Left cardiac atrium (tissue), 4 donors: ENCODE measurements at regions of chr10 and their contacts with region 1.

Region 1: DNA sequence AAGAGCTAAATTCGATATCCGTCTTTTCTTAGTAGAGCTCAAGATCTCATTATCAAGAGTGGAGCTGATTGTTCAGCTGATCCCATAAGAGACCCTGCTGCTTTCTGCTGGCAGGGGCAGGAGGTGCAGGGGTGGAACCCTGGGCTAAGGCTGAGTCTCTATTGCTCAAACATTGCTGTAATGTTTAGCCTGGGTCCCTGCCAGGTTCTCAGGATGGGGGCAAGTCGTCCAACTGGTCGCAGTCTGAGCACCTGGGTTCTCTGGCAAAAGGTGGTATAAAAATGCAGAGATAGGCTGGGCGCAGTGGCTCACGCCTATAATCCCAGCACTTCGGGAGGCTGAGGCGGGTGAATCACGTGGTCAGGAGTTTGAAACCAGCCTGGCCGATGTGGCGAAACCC is 62.0 kb upstream of the NRBF2 start:
- DNase-seq: no peak
- ATAC-seq: no peak

Region 2: GRCh38 chr10:62826273-62826672 is 244.9 kb before region 1 on chr10:
- intact Hi-C with region 1: loop called in 1 of 2 experiments (anchors 10 kb)
- DNase-seq: no peak
- ATAC-seq: no peak

Region 3: DNA sequence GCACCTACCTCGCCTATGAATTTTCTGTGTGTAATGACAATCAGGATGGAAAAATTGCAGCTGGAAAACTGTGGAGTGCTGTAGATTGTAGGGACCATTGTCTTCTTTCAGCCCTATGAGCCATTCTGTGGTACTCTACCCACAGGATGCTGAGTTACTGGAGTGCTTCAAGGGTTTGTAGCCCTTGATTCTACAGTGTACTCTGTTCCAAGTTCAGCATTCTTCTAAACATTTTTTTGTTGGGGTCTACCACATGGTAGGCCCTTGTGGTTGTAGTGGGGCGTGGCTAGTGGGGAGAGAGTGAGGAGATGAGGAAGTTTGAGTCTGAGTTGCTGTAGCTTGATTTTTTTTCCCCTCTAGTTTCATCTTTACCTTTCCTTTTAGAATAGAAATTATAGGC is 483.5 kb after region 1 on chr10:
- intact Hi-C with region 1: no loop called
- DNase-seq: no peak
- ATAC-seq: peak in 1 of 2 donors; percentile 32